ENCODE measurements at regions of chr9 and their contacts with region 1.

Region 1: GRCh38 chr9:120842690-120843499 is at the start of gene PSMD5:
- DNase-seq: peak; percentile 99
- ATAC-seq: peak; percentile 89
- H3K4me3 Mint-ChIP-seq: peak within 1 kb of the TSS; percentile 98
- H3K27ac Mint-ChIP-seq: peak within 1 kb of the TSS; percentile 91
- H3K4me1 Mint-ChIP-seq: peaks cover 70% of the 10 kb centered on the region
- H3K27me3 Mint-ChIP-seq: no peaks in the 10 kb centered on the region
- total RNA-seq, gene PSMD5: 53.5 to 58.3 TPM

Region 2: GRCh38 chr9:120579750-120580590 is 262.9 kb before region 1 on chr9 and contains the start of gene CDK5RAP2:
- CTCF ChIA-PET with region 1: no interaction called
- POLR2A ChIA-PET with region 1: no interaction called
- intact Hi-C with region 1: loop called in 1 of 2 experiments (anchors 1 kb)
- DNase-seq: peak; percentile 96
- ATAC-seq: peak; percentile 99
- H3K4me3 Mint-ChIP-seq: peak within 1 kb of the TSS; percentile 99
- H3K27ac Mint-ChIP-seq: peak within 1 kb of the TSS; percentile 94
- H3K4me1 Mint-ChIP-seq: peaks cover 40% of the 10 kb centered on the region
- H3K27me3 Mint-ChIP-seq: no peaks in the 10 kb centered on the region
- total RNA-seq, gene CDK5RAP2: 68.8 to 85.8 TPM

Region 3: DNA sequence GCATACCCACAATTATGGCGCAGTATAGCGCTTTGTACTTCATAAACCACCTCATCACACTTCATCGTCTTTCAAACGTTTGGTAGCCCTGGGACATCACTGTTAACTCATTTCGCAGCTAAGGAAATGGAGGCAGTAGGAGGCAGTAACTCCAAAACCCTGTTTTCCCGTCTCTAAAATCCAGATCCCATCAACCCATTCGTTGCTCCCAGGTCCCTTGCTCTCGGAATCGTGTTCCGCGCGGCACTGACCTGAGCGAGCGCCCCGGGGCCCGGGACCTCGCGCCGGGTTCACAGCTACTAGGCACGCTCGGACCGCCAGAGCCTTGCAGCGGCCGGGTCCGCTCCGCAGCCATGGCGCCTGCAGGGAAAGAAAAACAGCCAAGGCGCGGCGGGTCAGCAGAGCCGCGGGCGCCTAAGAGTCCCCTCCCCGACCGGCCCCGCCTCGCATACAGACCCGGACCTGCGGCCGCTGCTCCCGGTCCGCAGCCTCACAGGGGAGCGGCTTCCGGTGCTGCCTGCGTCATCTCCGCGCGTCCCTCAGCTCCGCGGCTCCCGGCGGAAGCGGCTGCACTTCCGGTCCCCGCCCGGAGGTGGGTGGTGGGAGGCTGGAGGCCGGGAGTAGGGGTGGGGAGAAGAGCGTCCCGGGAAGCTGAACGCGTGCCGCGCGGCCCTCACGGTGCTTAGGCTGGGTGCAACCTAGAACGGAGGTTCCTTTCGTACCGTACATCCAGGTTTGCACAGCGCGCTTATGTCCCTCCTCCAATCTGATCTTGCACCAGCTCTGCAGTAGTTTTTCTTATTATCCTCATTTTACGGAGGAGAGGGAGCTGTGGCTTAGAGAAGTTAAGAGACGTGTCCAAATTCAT is 49.8 kb before region 1 on chr9 and contains the start of gene FBXW2:
- CTCF ChIA-PET with region 1: no interaction called
- POLR2A ChIA-PET with region 1: interaction called, 7 read pairs
- intact Hi-C with region 1: loop called (anchors 1 kb)
- DNase-seq: peak; percentile 95
- ATAC-seq: peak; percentile 92
- H3K4me3 Mint-ChIP-seq: peak within 1 kb of the TSS; percentile 93
- H3K27ac Mint-ChIP-seq: peak within 1 kb of the TSS; percentile 97
- H3K4me1 Mint-ChIP-seq: peaks cover 43% of the 10 kb centered on the region
- H3K27me3 Mint-ChIP-seq: no peaks in the 10 kb centered on the region
- total RNA-seq, gene FBXW2: 53.0 to 68.1 TPM

Region 4: GRCh38 chr9:120820095-120820494 is 22.8 kb before region 1 on chr9:
- CTCF ChIA-PET with region 1: no interaction called
- POLR2A ChIA-PET with region 1: no interaction called
- intact Hi-C with region 1: no loop called
- DNase-seq: no peak
- ATAC-seq: no peak
- H3K4me3 Mint-ChIP-seq: no peak overlapping the region
- H3K27ac Mint-ChIP-seq: no peak overlapping the region
- H3K4me1 Mint-ChIP-seq: peaks cover 3% of the 10 kb centered on the region
- H3K27me3 Mint-ChIP-seq: no peaks in the 10 kb centered on the region

Region 5: DNA sequence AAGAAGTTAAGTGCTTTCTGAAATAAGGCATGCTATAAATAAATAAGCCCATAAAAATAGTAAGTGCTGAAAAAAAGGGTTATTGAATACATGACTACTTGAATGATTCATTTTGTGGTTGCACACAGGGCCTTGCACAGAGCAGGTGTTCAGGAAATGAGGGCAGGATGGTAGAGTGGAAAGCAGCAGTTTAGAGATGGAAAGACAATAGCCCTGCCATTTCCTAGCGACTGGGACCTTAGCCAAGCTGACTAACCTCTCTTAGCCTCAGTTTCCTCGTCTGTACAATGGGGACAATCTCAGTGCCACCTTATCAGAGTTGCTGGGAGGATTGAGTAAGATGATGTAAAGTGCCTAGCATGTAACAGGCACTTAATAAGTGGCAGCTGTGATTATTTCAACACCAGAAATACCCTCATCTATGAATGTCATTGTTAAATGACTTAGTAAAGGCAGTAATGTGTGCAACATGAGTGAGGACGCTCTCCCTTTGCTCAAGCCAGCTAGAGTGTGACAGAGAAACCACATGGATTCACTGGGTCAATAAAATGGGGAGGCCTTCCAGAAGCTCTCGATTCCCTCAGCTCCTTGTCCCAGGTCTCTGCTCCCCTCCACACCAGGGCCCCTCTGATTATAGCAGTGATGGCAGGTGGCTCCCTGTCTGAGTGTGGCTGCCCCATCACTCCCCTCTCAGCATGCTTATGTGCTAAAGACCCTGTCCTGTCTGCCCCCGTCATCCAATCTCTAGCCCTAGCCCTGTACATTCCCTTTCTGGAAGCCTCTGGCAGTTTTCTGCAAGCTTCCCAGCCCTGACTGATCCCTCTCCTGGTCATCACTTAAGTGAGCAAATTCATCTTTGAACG is 50.1 kb after region 1 on chr9:
- CTCF ChIA-PET with region 1: interaction called, 4 read pairs
- POLR2A ChIA-PET with region 1: interaction called, 7 read pairs
- intact Hi-C with region 1: loop called (anchors 1 to 2 kb)
- DNase-seq: peak; percentile 78
- ATAC-seq: peak; percentile 46
- H3K4me3 Mint-ChIP-seq: peak overlapping the region; percentile 67
- H3K27ac Mint-ChIP-seq: peak overlapping the region; percentile 100
- H3K4me1 Mint-ChIP-seq: peaks cover 89% of the 10 kb centered on the region
- H3K27me3 Mint-ChIP-seq: no peaks in the 10 kb centered on the region

Region 6: GRCh38 chr9:120936011-120936763 is 93.3 kb after region 1 on chr9:
- CTCF ChIA-PET with region 1: interaction called, 6 read pairs
- POLR2A ChIA-PET with region 1: interaction called, 9 read pairs
- intact Hi-C with region 1: loop called (anchors 1 kb)
- DNase-seq: peak; percentile 95
- ATAC-seq: peak; percentile 73
- H3K4me3 Mint-ChIP-seq: peak overlapping the region; percentile 34
- H3K27ac Mint-ChIP-seq: peak overlapping the region; percentile 93
- H3K4me1 Mint-ChIP-seq: peaks cover 62% of the 10 kb centered on the region
- H3K27me3 Mint-ChIP-seq: no peaks in the 10 kb centered on the region

Region 7: DNA sequence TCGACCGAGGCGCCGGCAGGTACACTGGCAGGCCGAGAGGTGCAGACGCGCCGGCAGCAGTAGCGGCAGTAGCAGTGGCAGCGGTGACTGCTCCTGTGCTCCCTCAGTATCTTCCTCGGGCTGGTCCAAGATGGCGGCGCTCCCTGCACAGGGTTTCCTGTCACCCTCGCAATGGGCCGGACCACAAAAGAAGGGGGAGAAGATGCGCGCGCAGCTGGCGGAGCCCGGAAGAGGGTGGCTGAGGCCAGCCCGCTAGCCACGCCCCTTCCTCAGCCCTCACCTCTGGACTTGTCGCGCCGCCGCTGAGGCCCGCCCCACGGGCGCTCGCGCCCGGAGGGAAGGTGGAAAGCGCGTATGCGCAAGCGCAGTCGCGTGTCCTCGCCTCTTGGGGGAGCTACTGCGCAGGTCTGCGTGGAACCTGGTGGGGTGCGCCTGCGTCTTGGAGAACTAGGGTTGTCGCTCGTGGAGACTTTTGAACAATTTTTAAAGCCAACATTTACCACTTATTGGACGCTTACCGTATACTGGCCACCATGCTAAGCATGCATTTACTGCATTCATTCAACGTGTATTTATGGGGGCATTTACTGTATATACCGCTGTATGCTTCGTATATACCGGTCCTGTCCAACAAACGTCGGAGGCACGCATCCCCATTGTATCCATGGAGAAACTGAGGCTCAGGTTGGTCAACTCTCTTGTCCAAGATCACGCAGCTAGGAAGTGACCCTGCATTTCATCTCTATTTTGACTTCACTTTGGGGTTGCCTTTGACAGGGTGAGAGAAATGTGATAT is 359.0 kb after region 1 on chr9 and contains the start of gene RAB14:
- CTCF ChIA-PET with region 1: no interaction called
- POLR2A ChIA-PET with region 1: no interaction called
- intact Hi-C with region 1: loop called in 1 of 2 experiments (anchors 2 kb)
- DNase-seq: peak; percentile 100
- ATAC-seq: peak; percentile 92
- H3K4me3 Mint-ChIP-seq: peak within 1 kb of the TSS; percentile 93
- H3K27ac Mint-ChIP-seq: peak within 1 kb of the TSS; percentile 93
- H3K4me1 Mint-ChIP-seq: peaks cover 38% of the 10 kb centered on the region
- H3K27me3 Mint-ChIP-seq: no peaks in the 10 kb centered on the region
- total RNA-seq, gene RAB14: 52.3 to 54.7 TPM

Region 8: GRCh38 chr9:122180651-122181050 is 1337.8 kb after region 1 on chr9:
- CTCF ChIA-PET with region 1: no interaction called
- POLR2A ChIA-PET with region 1: no interaction called
- intact Hi-C with region 1: no loop called
- DNase-seq: no peak
- ATAC-seq: no peak
- H3K4me3 Mint-ChIP-seq: no peak overlapping the region
- H3K27ac Mint-ChIP-seq: no peak overlapping the region
- H3K4me1 Mint-ChIP-seq: no peaks in the 10 kb centered on the region
- H3K27me3 Mint-ChIP-seq: peaks cover 7% of the 10 kb centered on the region

Measured in activated CD4-positive, alpha-beta T cell treated with anti-CD3 and anti-CD28 coated beads for 36 hours (primary cell).